ENCODE measurements at regions of chr13 and their contacts with region 1.

Region 1: DNA sequence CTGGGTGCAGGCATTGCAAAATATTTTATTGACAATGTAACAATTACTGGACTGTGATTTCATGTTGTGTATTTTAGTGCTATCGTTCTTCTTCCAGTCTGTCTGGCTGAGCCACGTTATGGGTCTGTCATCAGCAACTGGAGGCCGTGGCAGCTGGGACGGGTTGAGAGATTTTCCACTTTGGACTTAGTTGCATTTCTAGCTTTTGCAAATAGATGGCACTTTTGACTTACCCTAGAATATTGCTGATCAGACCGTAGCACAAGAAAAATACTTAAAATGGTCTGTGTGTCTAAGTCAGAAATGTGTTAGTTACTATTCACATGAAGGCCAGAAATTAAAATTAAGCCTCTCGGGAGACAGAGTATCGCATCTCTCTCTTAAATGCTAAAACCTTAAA is 211.1 kb downstream of the TEX29 start:
- ATAC-seq: peak in 6 of 8 experiments; percentile 9 to 72 (median 67)
- H3K4me3 ChIP-seq: no peak overlapping the region
- H3K27ac ChIP-seq: no peak overlapping the region
- H3K4me1 ChIP-seq: peaks cover 9 to 41% of the 10 kb centered on the region in 2 donors

Region 2: DNA sequence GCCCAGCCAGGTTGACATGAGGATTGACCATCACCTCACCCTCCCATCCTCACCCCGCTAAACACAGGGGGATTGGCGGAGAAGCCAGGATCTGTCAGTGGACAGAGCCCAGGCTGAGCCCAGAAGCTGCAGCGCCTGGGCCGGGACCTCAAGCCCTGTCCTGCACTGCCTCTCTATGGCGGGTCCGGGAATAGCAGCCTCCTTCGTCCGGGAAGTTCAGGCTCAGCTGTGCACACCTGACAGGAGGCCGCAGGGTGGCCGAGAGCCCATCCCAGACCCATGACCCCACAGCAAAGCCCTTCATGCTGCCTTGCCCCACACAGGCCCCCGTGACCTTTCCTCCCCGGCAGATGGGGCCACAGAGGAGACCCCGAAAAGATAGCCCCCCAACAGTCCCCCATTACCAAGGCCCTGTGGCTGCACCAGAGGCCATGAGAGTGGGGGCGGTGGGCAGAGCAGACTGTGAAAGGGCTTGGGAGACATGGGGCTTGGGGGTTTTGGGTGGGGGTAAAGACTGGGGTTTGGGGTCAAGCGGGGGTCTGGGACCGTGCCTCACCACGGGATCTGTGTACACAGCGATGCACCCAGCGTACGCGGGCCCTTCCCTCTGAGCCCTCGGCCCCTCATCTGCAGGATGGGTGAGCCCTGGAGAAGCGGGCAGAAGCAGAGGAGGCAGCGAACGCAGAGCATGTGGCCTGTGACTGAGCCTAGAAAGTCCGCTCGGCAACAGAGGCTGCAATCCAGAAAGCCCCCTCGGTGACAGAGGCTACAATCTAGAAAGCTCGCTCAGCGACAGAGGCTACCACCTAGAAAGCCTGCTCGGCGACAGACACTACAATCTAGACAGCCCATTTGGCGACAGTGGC is 912.7 kb after region 1 on chr13:
- in situ Hi-C with region 1: loop called in 1 of 9 experiments (anchors 10 kb)
- ATAC-seq: peak; percentile 72 to 97 (median 94)
- H3K4me3 ChIP-seq: no peak overlapping the region
- H3K27ac ChIP-seq: no peak overlapping the region
- H3K4me1 ChIP-seq: peaks cover 0 to 14% of the 10 kb centered on the region in 2 donors